B cell (primary cell): ENCODE measurements at regions of chr5 and their contacts with region 1.

Region 1: DNA sequence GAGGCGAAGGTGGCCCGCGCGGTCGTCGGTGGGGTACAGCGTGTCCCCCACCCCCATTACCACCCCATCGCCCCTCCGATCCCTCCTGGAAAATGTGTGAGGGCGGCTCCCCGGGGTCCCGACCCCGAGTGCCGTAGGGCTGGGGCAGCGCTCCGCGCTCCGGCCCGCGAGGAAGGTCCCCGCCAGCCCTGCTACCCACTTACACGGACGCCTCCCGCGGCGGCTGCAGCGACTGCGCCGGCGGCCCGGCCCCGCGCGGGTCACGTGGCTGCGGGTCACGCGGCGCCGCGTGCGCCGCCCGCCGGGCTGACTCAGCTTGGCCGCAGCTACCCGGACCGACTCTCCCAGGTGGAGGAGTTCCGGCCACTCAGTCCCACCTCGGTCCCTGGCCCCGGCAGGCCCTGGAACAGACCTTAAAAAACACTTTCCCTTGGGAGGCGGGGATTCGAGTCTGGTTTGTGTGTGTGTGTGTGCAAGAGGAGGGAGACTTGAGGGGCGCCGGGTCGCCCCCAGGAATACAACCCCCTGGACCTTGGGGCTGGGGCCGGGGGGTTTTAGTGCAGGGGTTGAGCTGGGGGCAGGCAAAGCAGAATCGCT is at the start of gene GNPDA1:
- DNase-seq: peak; percentile 83
- ATAC-seq: peak; percentile 88
- H3K4me3 ChIP-seq: peak within 1 kb of the TSS; percentile 44 to 74 (median 67)
- H3K4me3 Mint-ChIP-seq: peak within 1 kb of the TSS; percentile 89
- H3K27ac ChIP-seq: peak within 1 kb of the TSS; percentile 45 to 59
- H3K27ac Mint-ChIP-seq: peak within 1 kb of the TSS; percentile 78
- H3K4me1 ChIP-seq: peaks cover 27 to 30% of the 10 kb centered on the region in 2 donors
- H3K4me1 Mint-ChIP-seq: peaks cover 43% of the 10 kb centered on the region
- H3K27me3 ChIP-seq: no peaks in the 10 kb centered on the region
- H3K27me3 Mint-ChIP-seq: peaks cover 3% of the 10 kb centered on the region
- CTCF ChIP-seq: no peak
- total RNA-seq, gene GNPDA1: 12.1 and 15.0 TPM in 2 replicates

Region 2: DNA sequence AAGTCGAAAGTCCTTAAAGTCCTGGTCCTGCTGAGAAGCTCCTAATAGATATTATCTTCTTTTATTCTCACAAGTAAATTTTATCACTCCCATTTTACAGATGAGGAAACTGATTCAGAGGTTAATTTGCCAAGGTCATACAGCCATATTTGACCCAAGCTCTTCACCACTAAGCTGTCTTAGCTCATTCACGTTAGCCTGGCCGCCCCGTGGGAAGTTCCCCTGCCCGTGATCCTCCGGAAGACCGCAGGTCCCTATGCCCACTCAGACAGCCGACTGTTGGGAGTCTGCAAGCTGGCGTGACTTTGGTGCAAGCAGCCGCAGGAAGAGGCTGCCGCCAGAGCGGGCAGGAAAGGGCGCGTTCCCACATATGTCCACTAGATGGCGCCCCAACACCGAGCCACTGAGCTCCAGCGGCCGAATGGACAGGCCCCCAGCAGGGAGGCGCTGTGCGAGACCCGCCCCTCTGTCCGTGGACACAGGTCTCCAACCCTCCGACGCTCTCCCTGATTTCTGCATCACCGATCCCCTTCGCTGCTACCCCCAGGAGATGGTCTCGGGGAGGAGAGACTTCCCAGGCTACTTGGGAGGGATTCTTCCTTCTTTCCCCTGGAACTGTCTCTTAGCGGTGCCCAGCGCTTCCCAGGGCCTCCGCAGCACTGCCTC is 320.9 kb before region 1 on chr5:
- CTCF ChIA-PET with region 1: interaction called, 34 read pairs
- POLR2A ChIA-PET with region 1: interaction called, 3 read pairs
- intact Hi-C with region 1: loop called (anchors 1 kb)
- DNase-seq: peak; percentile 86
- ATAC-seq: peak; percentile 95
- H3K4me3 ChIP-seq: peak overlapping the region in 4 of 5 experiments; percentile 3 to 57 (median 33)
- H3K4me3 Mint-ChIP-seq: peak overlapping the region; percentile 44
- H3K27ac ChIP-seq: no peak overlapping the region
- H3K27ac Mint-ChIP-seq: no peak overlapping the region
- H3K4me1 ChIP-seq: peaks cover 8% of the 10 kb centered on the region in 2 donors
- H3K4me1 Mint-ChIP-seq: peaks cover 7% of the 10 kb centered on the region
- H3K27me3 ChIP-seq: peaks cover 0 to 47% (median 7%) of the 10 kb centered on the region in 4 experiments
- H3K27me3 Mint-ChIP-seq: peaks cover 68% of the 10 kb centered on the region
- CTCF ChIP-seq: peak; percentile 98

Region 3: GRCh38 chr5:142000703-142001484 is 12.0 kb before region 1 on chr5:
- CTCF ChIA-PET with region 1: interaction called, 12 read pairs
- POLR2A ChIA-PET with region 1: no interaction called
- intact Hi-C with region 1: no loop called
- DNase-seq: no peak
- ATAC-seq: no peak
- H3K4me3 ChIP-seq: no peak overlapping the region
- H3K4me3 Mint-ChIP-seq: no peak overlapping the region
- H3K27ac ChIP-seq: no peak overlapping the region
- H3K27ac Mint-ChIP-seq: peak overlapping the region; percentile 32
- H3K4me1 ChIP-seq: no peaks in the 10 kb centered on the region
- H3K4me1 Mint-ChIP-seq: no peaks in the 10 kb centered on the region
- H3K27me3 ChIP-seq: no peaks in the 10 kb centered on the region
- H3K27me3 Mint-ChIP-seq: no peaks in the 10 kb centered on the region
- CTCF ChIP-seq: no peak

Region 4: DNA sequence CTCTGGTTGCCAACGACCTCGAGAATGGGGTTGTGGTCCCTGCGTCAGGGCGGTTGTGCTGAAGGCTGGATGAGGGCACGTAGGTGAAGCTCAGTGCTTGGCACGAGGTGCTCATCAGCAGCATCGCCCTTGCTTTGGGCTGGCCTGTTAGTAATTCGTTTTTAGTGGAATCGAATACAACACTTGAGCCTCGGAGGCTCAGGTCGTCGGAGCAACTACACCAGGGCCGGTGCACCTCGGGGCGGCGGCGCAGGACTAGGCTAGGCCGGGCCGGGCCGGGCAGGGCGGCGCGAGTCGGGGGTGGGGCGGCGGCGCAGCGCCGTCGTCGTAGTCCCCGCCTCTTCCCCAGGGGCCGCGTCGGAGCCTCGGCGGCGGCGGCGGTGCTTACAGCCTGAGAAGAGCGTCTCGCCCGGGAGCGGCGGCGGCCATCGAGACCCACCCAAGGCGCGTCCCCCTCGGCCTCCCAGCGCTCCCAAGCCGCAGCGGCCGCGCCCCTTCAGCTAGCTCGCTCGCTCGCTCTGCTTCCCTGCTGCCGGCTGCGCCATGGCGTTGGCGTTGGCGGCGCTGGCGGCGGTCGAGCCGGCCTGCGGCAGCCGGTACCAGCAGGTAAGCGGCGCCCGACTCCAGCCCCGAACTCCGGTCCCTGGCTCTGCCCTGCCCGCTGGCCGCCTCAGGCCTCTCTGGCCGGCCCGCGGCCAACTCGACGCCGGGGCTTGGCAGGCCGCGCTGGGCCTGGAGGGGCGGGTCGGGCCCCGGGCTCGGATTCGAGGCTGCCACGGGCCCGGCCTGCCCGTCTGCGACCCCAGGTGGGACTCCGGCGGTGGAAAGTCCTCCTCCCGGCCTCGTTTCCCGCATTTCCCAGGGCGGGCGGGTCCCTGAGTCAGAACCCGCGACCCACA is 95.8 kb after region 1 on chr5 and contains the start of gene NDFIP1:
- CTCF ChIA-PET with region 1: interaction called, 6 read pairs
- POLR2A ChIA-PET with region 1: interaction called, 4 read pairs
- intact Hi-C with region 1: loop called (anchors 2 kb)
- DNase-seq: peak; percentile 91
- ATAC-seq: peak; percentile 98
- H3K4me3 ChIP-seq: peak within 1 kb of the TSS; percentile 62 to 90 (median 77)
- H3K4me3 Mint-ChIP-seq: peak within 1 kb of the TSS; percentile 92
- H3K27ac ChIP-seq: peak within 1 kb of the TSS; percentile 49 to 83
- H3K27ac Mint-ChIP-seq: peak within 1 kb of the TSS; percentile 93
- H3K4me1 ChIP-seq: peaks cover 14 to 17% of the 10 kb centered on the region in 2 donors
- H3K4me1 Mint-ChIP-seq: peaks cover 31% of the 10 kb centered on the region
- H3K27me3 ChIP-seq: no peaks in the 10 kb centered on the region
- H3K27me3 Mint-ChIP-seq: no peaks in the 10 kb centered on the region
- CTCF ChIP-seq: no peak
- total RNA-seq, gene NDFIP1: 34.6 TPM in 2 replicates

Region 5: DNA sequence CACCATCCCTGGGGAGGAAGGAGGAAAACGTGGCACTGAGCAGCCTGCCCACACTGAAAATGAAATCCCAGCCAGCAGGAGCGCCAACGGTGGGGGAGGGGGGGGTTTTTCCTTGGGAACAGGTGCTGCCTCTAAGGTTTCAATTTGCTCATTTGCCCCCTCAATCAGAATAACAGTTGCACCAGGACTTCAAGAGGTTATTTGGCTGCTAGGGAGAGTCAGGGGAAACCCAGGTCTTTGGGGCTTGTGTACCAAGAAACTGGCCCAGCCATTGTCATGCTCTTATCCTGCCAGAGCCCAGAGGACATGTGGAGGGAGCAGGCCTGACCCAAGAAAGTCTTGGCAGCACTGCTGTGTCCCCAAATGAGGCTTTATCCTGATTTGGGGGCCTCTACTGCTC is 162.1 kb after region 1 on chr5:
- CTCF ChIA-PET with region 1: no interaction called
- POLR2A ChIA-PET with region 1: no interaction called
- intact Hi-C with region 1: no loop called
- DNase-seq: no peak
- ATAC-seq: no peak
- H3K4me3 ChIP-seq: no peak overlapping the region
- H3K4me3 Mint-ChIP-seq: no peak overlapping the region
- H3K27ac ChIP-seq: no peak overlapping the region
- H3K27ac Mint-ChIP-seq: no peak overlapping the region
- H3K4me1 ChIP-seq: no peaks in the 10 kb centered on the region
- H3K4me1 Mint-ChIP-seq: no peaks in the 10 kb centered on the region
- H3K27me3 ChIP-seq: no peaks in the 10 kb centered on the region
- H3K27me3 Mint-ChIP-seq: peaks cover 11% of the 10 kb centered on the region
- CTCF ChIP-seq: no peak

Region 6: DNA sequence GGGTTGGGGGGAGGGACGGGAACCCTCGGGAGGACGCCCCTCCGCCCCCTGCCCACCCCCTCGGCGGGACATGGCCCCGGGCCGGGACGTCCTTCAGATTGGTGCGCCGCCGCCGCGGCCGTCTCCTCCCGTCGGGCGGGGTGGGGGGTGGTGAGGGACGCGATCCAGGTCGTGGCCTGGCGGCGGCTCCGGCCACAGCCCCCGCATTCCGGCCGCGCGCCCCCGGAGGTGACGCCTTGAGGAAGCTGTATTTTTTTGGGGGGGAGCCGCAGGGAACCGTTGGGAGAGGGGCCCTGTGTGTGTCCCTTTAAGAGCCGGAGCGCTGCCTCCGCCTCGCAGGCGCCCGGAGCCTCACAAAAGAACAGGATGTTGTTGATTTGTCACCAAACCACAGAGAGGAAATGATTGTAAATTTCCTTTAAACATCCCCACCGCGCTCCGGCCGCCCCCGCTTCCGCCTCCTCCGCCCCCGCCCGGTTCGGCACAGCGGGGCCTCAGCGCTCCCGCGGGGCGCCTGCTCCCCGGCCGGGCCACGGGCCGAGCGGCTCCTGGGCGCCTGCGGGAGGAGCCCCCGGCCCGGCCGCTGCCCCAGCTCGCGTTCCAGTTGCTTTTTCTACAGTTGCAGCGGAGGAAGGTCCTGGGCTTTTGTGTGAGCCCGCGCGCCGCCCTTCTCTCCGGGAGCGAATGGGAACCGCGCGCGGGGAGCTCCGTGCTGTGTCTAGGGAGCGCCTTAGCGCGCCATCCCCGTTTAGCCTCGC is 344.0 kb after region 1 on chr5:
- CTCF ChIA-PET with region 1: no interaction called
- POLR2A ChIA-PET with region 1: no interaction called
- intact Hi-C with region 1: loop called (anchors 10 kb)
- DNase-seq: peak; percentile 90
- ATAC-seq: peak; percentile 84
- H3K4me3 ChIP-seq: peak overlapping the region; percentile 54 to 86 (median 64)
- H3K4me3 Mint-ChIP-seq: peak overlapping the region; percentile 84
- H3K27ac ChIP-seq: peak overlapping the region; percentile 28 to 83
- H3K27ac Mint-ChIP-seq: peak overlapping the region; percentile 80
- H3K4me1 ChIP-seq: peaks cover 40 to 44% of the 10 kb centered on the region in 2 donors
- H3K4me1 Mint-ChIP-seq: peaks cover 47% of the 10 kb centered on the region
- H3K27me3 ChIP-seq: peaks cover 0 to 27% (median 10%) of the 10 kb centered on the region in 4 experiments
- H3K27me3 Mint-ChIP-seq: peaks cover 9% of the 10 kb centered on the region
- CTCF ChIP-seq: no peak

Region 7: DNA sequence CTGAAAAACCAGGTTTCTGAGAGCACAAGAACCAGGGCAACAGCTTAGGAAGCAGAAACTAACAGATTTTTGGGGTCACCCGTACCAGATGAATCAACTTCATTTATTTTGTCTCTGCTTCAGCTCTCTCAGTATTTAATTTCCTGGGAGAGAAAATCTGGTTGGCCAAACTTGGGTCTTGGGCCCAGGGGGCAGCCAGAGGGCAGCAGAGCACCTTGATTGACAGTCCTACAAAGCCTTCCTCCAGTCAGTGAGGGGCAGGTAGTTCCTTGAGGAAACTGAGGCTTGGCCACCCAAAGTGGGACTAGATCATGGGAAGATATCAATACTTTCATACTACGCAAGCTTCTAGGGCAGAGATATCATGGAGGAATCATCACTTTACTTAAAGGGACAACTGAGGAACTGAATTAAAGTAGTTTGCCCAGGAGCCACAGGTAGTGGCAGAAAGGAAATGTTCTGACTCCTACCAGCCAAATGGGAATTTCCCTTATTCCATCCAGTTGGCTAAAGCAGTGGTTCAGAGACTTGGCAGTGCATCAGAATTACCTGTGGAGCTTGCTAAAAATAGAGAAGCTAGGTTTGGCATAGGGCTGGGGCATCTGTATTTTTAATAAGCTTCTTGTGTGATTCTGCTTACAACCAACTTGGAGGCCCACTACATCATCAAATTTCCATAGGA is 735.8 kb after region 1 on chr5:
- CTCF ChIA-PET with region 1: no interaction called
- POLR2A ChIA-PET with region 1: no interaction called
- intact Hi-C with region 1: no loop called
- DNase-seq: peak; percentile 74
- ATAC-seq: peak; percentile 68
- H3K4me3 ChIP-seq: no peak overlapping the region
- H3K4me3 Mint-ChIP-seq: no peak overlapping the region
- H3K27ac ChIP-seq: no peak overlapping the region
- H3K27ac Mint-ChIP-seq: no peak overlapping the region
- H3K4me1 ChIP-seq: no peaks in the 10 kb centered on the region
- H3K4me1 Mint-ChIP-seq: no peaks in the 10 kb centered on the region
- H3K27me3 ChIP-seq: no peaks in the 10 kb centered on the region
- H3K27me3 Mint-ChIP-seq: peaks cover 13% of the 10 kb centered on the region
- CTCF ChIP-seq: peak; percentile 80